Uterus (tissue), 4 donors: ENCODE measurements at regions of chr10 and their contacts with region 1.

Region 1: GRCh38 chr10:62231371-62231770 is 37.3 kb downstream of the RTKN2 start:
- DNase-seq: no peak
- H3K4me3 ChIP-seq: no peak overlapping the region
- H3K27ac ChIP-seq: peak overlapping the region in 1 of 2 donors; percentile 59
- H3K4me1 ChIP-seq: no peaks in the 10 kb centered on the region
- H3K27me3 ChIP-seq: no peaks in the 10 kb centered on the region
- CTCF ChIP-seq: no peak
- POLR2A ChIP-seq: no peak

Region 2: GRCh38 chr10:61091531-61091930 is 1139.8 kb before region 1 on chr10:
- intact Hi-C with region 1: no loop called
- DNase-seq: no peak
- H3K4me3 ChIP-seq: no peak overlapping the region
- H3K27ac ChIP-seq: no peak overlapping the region
- H3K4me1 ChIP-seq: no peaks in the 10 kb centered on the region
- H3K27me3 ChIP-seq: no peaks in the 10 kb centered on the region
- CTCF ChIP-seq: no peak
- POLR2A ChIP-seq: no peak

Region 3: DNA sequence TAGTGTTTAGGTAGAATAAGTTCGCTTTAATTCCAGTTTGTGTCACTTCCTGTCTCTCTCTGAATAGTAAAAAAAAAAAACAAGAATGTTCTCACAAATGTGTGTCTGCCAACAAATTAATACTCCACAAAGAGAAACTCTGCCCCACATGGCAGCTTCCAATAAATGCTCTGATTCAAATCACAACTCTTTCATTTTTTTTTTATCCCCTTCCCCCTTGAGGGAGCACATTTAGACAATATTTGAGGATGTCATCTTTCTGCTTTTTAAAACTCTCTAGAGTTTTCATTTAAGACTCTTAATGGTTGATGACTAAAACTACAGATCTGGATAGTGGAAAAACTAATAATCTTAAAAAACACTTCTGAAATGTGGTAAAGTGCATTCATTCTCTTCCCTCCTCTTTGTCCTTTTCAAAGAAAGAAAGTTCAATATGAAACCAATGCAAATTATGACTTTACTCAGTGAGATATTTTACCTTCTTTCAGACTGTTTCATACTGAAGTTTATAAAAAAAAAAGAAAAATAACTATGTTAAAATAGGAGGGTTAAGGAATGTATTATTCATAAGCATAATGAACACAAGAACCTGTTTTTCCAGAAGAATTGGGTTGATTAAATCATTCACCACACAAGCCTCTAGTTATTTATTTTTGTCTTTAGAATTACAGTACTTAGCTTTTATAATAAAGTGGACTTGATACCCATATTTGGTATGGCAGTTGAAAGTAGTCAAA is 287.5 kb before region 1 on chr10:
- intact Hi-C with region 1: no loop called
- DNase-seq: no peak
- H3K4me3 ChIP-seq: no peak overlapping the region
- H3K27ac ChIP-seq: peak overlapping the region; percentile 80 to 91
- H3K4me1 ChIP-seq: peaks cover 0 to 3% of the 10 kb centered on the region in 2 donors
- H3K27me3 ChIP-seq: no peaks in the 10 kb centered on the region
- CTCF ChIP-seq: peak in 2 of 4 experiments; percentile 8 to 16
- POLR2A ChIP-seq: no peak

Region 4: DNA sequence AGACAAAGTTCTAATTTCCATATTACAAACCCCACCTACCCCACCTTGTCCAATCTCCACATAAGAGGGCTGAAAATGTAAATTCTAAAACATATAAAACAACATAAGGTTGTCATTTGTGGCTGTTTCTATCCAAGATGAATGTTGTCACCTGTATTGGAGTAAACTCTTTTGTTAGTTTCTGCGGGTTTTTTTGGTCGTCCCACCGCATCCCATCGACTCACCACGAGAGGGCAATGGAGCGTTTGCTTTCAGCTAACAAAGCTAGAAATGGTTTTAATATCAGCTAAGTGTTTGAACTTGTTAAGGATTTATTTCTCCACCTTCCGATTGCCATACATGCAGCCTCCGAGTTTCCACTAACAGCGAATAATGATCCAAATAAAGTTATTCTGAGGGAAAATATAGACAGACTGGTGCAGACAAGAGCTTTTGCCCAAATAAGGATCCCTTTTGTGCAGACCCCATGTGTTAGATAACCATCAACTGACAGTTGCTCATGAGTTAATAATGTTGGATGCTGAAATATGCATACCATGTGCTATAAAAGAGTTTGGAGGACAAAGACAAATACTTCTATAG is 192.7 kb before region 1 on chr10:
- intact Hi-C with region 1: loop called (anchors 10 kb)
- DNase-seq: peak; percentile 81 to 85
- H3K4me3 ChIP-seq: no peak overlapping the region
- H3K27ac ChIP-seq: peak overlapping the region; percentile 79 to 96
- H3K4me1 ChIP-seq: peaks cover 6 to 21% of the 10 kb centered on the region in 2 donors
- H3K27me3 ChIP-seq: no peaks in the 10 kb centered on the region
- CTCF ChIP-seq: peak; percentile 80 to 92 (median 83)
- POLR2A ChIP-seq: no peak

Region 5: DNA sequence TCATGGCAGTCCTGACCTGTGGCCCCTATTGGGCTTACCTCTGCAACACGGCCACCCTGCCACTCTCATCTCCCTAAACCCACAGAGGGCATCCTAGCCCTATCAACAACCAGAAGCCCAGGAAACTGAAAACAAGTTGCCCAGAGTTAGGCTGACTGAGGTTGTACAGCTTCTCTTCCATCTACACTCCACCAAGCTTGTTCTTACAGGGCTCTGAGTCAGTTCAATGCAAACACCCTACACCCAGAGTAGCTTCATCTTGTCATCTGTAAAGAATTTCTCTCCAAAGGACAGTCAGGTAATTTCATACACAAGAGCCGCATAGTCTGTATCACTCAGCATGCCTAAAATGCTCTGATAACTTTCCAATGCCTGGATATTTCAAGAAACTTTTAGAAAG is 154.5 kb before region 1 on chr10:
- intact Hi-C with region 1: no loop called
- DNase-seq: no peak
- H3K4me3 ChIP-seq: no peak overlapping the region
- H3K27ac ChIP-seq: peak overlapping the region; percentile 64 to 89
- H3K4me1 ChIP-seq: peaks cover 5 to 18% of the 10 kb centered on the region in 2 donors
- H3K27me3 ChIP-seq: no peaks in the 10 kb centered on the region
- CTCF ChIP-seq: no peak
- POLR2A ChIP-seq: no peak